Right ventricle myocardium superior (tissue), 1 donor: ENCODE measurements at regions of chr9 and their contacts with region 1.

Region 1: GRCh38 chr9:893843-894420 is 52.4 kb downstream of the DMRT1 start:
- DNase-seq: peak; percentile 47
- ATAC-seq: peak; percentile 80

Region 2: DNA sequence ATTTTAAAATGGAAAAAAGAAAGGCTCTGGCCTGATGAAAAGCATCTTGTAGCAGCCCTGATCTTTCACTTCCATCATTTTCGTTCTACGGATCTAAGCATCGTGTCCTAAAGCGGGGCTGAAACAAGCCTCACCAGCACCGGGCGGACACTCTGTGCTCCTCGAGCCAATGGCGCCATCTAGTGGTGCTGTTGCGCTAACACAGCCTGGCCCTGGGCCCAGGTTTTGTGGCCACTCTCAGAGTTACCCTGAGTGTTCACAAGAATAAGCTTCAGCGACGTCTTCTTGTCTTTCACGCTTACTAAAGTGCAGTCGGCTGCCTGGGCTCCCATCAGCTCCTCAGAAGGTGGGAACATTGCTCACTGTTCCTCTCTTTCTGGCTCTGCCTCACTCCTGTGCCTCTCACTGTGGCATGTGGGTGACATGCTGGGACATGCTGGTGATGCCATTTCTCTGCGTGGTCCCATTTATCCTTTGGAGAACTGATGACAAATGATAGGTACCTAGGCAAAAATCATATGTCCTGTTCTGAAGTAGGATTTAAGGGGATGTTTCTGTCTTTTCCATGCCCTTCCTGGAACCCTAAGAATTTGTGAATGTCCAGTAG is 115.3 kb after region 1 on chr9:
- intact Hi-C with region 1: loop called (anchors 5 kb)
- DNase-seq: peak; percentile 90
- ATAC-seq: peak; percentile 97

Region 3: GRCh38 chr9:1025131-1025530 is 131.2 kb after region 1 on chr9:
- intact Hi-C with region 1: no loop called
- DNase-seq: no peak
- ATAC-seq: no peak

Region 4: DNA sequence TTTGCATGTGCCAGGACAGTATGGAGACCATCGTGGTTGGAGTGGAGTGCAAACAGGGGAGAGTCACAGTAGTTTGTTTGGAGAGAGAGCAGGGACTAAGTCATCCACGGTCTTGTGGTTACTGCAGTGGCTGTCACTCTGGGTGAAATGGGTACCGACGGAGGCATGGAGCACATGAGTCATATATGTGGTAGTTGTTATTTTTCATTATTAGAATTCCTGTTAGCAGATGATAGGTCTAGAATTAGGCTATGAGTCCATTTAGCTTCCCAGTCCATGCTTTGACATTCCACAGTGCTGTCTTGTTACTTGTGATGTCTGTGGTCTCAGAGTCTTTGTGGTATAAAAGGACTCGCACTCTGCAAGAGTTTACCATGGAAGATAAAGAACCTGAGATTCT is 460.2 kb after region 1 on chr9:
- intact Hi-C with region 1: no loop called
- DNase-seq: no peak
- ATAC-seq: no peak